HEK293 (cell line): ENCODE measurements at regions of chr9 and their contacts with region 1.

Region 1: GRCh38 chr9:114155263-114155972 is at the start of gene COL27A1:
- H3K4me3 ChIP-seq: peak within 1 kb of the TSS; percentile 66
- H3K27ac ChIP-seq: peak within 1 kb of the TSS; percentile 56; the same call in 1 of the 2 replicates
- H3K4me1 ChIP-seq: no peaks in the 10 kb centered on the region; the same call in 1 of the 2 replicates
- CTCF ChIP-seq: peak; percentile 80

Region 2: GRCh38 chr9:114141553-114142402 is 13.6 kb before region 1 on chr9:
- CTCF ChIA-PET with region 1: interaction called, 10 read pairs
- POLR2A ChIA-PET with region 1: interaction called, 3 read pairs
- H3K4me3 ChIP-seq: no peak overlapping the region
- H3K27ac ChIP-seq: no peak overlapping the region
- H3K4me1 ChIP-seq: no peaks in the 10 kb centered on the region
- CTCF ChIP-seq: no peak

Region 3: DNA sequence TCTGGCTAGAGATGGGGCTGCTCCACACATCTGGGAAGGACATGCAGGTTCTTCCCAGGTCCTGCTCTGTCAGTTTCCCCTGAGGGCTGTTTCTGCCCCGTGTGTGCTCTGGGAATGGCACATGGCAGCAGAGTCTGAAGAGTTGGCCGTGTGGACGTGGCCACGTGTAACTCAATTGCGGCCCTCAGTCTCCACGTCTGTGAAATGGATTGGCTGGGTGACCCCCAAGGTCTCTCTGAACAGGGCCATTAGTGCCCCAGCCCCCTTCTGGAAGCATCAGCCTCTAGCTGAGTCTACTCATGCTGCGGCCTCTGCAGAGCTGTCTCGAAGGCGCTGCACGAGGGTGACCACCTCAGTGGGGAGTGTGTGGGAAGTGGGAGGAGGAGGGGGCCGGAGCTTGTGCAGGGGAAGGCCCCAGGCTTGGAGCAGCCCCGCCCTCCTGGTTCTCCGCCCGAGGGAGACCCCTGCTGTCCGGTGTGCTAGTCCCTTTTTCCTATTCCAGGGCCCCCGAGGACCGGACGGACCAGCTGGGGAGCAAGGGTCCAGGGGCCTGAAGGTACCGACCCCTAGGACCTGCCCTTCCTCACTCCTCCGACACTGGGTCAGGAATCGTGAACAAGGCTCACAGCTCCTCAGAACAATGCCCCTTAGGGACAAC is 108.6 kb after region 1 on chr9:
- CTCF ChIA-PET with region 1: interaction called, 11 read pairs
- POLR2A ChIA-PET with region 1: no interaction called
- H3K4me3 ChIP-seq: no peak overlapping the region
- H3K27ac ChIP-seq: no peak overlapping the region
- H3K4me1 ChIP-seq: no peaks in the 10 kb centered on the region
- CTCF ChIP-seq: no peak